Dorsolateral prefrontal cortex (tissue), 120 donors: ENCODE measurements at regions of chr10 and their contacts with region 1.

Region 1: GRCh38 chr10:27504007-27504807 is at the start of gene RAB18:
- DNase-seq: peak; percentile 91 to 97 (median 94)
- H3K4me3 ChIP-seq: peak within 1 kb of the TSS; percentile 66 to 97 (median 88)
- H3K27ac ChIP-seq: peak within 1 kb of the TSS; percentile 2 to 95 (median 82)
- H3K27me3 ChIP-seq: no peaks in the 10 kb centered on the region
- CTCF ChIP-seq: peak in 52 of 56 donors; percentile 5 to 70 (median 43)
- total RNA-seq, gene RAB18: 87.4 to 185 (median 148) TPM

Region 2: GRCh38 chr10:27169849-27170248 is 334.4 kb before region 1 on chr10:
- intact Hi-C with region 1: no loop called
- DNase-seq: no peak
- H3K4me3 ChIP-seq: no peak overlapping the region
- H3K27ac ChIP-seq: no peak overlapping the region
- H3K27me3 ChIP-seq: no peaks in the 10 kb centered on the region
- CTCF ChIP-seq: no peak

Region 3: DNA sequence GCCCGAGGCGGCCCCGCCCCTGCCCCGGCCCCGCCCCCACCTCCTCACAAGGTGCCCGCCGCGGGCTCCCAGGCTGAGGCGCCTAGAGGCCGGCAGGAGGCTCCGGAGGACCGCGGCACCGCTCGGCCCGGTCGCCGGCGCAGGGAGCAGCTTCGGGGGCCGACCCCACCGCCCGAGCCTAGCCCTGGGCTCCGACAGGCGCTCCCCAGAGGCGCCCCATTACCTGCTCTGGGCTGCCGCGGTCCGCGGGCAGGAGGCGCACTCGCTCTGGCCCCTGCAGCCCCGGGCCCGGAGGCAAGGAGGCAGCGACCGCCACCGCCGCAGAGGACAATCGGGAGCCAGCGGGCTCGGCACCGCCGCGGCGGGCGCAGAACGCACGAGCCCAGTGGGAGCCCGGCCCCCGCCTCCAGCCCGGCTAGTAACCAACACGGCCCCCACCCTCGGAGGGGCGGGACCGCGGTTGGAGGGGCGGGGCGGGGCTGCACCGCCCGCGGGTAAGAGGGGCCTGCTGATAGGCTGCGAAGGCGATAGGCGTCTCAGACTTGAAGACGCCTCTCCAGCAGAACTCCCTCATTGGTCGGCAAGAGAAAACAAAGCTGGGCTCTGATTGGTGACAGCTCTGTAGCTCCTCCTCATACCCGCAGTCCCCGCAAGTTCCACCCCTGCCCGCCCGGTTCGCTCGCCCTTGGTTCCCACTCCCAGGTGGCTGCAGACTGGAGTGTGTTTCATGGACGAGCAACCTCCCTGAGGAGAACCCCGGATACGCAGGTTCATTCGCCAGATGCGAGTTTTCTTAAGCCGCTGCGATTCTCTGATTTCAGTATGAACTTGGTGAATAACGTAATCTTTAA is 798.7 kb after region 1 on chr10 and contains the start of gene MPP7:
- intact Hi-C with region 1: loop called in 1 of 2 experiments (anchors 10 kb)
- DNase-seq: peak; percentile 92 to 99 (median 96)
- H3K4me3 ChIP-seq: peak within 1 kb of the TSS; percentile 64 to 98 (median 86)
- H3K27ac ChIP-seq: peak within 1 kb of the TSS in 51 of 59 donors; percentile 22 to 92 (median 75)
- H3K27me3 ChIP-seq: peaks cover 0 to 11% (median 0%) of the 10 kb centered on the region in 45 donors
- CTCF ChIP-seq: peak in 28 of 56 donors; percentile 4 to 50 (median 23)
- total RNA-seq, gene MPP7: 6.6 to 26.4 (median 16.2) TPM

Region 4: GRCh38 chr10:28532383-28533175 is 1028.4 kb after region 1 on chr10 and contains the start of gene WAC:
- intact Hi-C with region 1: loop called in 1 of 2 experiments (anchors 10 kb)
- DNase-seq: peak; percentile 83 to 97 (median 92)
- H3K4me3 ChIP-seq: peak within 1 kb of the TSS; percentile 73 to 99 (median 93)
- H3K27ac ChIP-seq: peak within 1 kb of the TSS; percentile 95 to 100 (median 100)
- H3K27me3 ChIP-seq: no peaks in the 10 kb centered on the region
- CTCF ChIP-seq: peak in 24 of 56 donors; percentile 3 to 41 (median 19)
- total RNA-seq, gene WAC: 123 to 241 (median 182) TPM